OCI-LY7 (cell line): ENCODE measurements at regions of chr14 and their contacts with region 1.

Region 1: DNA sequence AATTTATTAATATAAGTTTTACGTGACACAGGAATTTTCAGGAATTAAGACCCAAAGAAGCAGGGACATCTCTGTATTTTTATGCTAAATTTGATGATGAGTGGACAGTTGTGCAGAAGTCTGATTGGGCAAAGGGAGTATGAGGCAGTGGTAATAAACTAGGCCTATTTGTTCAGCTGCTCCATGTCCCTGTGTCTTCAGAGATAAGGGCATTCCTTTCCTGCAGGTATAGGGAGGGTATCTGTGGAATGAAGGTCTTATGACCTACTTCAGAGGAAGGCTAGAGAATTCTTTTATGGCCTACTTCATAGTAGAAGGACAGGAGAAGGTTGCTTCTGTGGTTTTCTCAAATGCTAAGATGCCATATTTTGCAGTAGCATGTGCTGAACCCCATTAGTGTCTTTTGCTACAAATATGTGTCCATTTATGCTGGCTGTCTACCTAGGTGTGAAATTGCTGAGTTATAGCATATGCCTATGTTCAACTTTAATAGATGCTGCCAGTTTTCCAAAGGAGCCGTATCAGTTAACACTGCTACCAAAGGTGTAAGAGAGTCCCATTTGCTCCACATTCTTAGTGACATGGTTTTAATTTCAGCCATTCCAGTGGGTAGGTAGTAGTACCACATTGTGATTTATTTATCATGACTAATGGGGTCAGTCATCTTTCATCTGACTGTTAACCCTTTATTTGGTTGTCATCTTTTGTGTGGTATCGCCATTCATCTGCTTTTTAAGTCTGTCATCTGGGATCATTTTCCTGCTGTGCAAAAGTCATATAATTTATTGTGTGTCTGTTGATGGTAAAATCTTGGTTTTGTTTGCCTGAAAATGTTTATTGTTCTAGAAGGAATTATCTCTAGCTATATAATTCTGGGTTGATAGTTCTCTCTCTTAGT is 410.7 kb upstream of the RGS6 start:
- DNase-seq: no peak
- H3K4me3 ChIP-seq: no peak overlapping the region
- H3K27ac ChIP-seq: no peak overlapping the region
- H3K4me1 ChIP-seq: peaks cover 14% of the 10 kb centered on the region
- CTCF ChIP-seq: no peak

Region 2: GRCh38 chr14:71478542-71478941 is 42.9 kb before region 1 on chr14:
- CTCF ChIA-PET with region 1: no interaction called
- POLR2A ChIA-PET with region 1: interaction called, 3 read pairs
- intact Hi-C with region 1: loop called (anchors 2 kb)
- DNase-seq: peak; percentile 7
- H3K4me3 ChIP-seq: no peak overlapping the region
- H3K27ac ChIP-seq: no peak overlapping the region
- H3K4me1 ChIP-seq: peaks cover 7% of the 10 kb centered on the region
- CTCF ChIP-seq: no peak